ENCODE measurements at regions of chr9 and their contacts with region 1.

Region 1: GRCh38 chr9:38249587-38250210 is 142.8 kb upstream of the ALDH1B1 start:
- DNase-seq: no peak
- ATAC-seq: no peak
- H3K4me3 ChIP-seq: no peak overlapping the region
- H3K27ac ChIP-seq: no peak overlapping the region
- H3K4me1 ChIP-seq: no peaks in the 10 kb centered on the region
- H3K27me3 ChIP-seq: no peaks in the 10 kb centered on the region
- CTCF ChIP-seq: no peak

Region 2: GRCh38 chr9:37800631-37801286 is 448.9 kb before region 1 on chr9 and contains the start of gene DCAF10:
- CTCF ChIA-PET with region 1: no interaction called
- POLR2A ChIA-PET with region 1: interaction called, 11 read pairs
- in situ Hi-C with region 1: no loop called
- intact Hi-C with region 1: no loop called
- DNase-seq: no peak
- ATAC-seq: peak; percentile 96
- H3K4me3 ChIP-seq: peak within 1 kb of the TSS; percentile 78 to 87
- H3K27ac ChIP-seq: peak within 1 kb of the TSS; percentile 83
- H3K4me1 ChIP-seq: peaks cover 4% of the 10 kb centered on the region; the same call in 1 of the 2 replicates
- H3K27me3 ChIP-seq: no peaks in the 10 kb centered on the region
- CTCF ChIP-seq: no peak
- total RNA-seq, gene DCAF10: 18.5 TPM

Region 3: GRCh38 chr9:38141746-38142591 is 107.7 kb before region 1 on chr9:
- CTCF ChIA-PET with region 1: no interaction called
- POLR2A ChIA-PET with region 1: no interaction called
- in situ Hi-C with region 1: no loop called
- intact Hi-C with region 1: no loop called
- DNase-seq: no peak
- ATAC-seq: no peak
- H3K4me3 ChIP-seq: no peak overlapping the region
- H3K27ac ChIP-seq: no peak overlapping the region
- H3K4me1 ChIP-seq: no peaks in the 10 kb centered on the region
- H3K27me3 ChIP-seq: peaks cover 6% of the 10 kb centered on the region
- CTCF ChIP-seq: no peak

Region 4: GRCh38 chr9:38380872-38381534 is 131.3 kb after region 1 on chr9:
- CTCF ChIA-PET with region 1: no interaction called
- POLR2A ChIA-PET with region 1: no interaction called
- in situ Hi-C with region 1: no loop called
- intact Hi-C with region 1: no loop called
- DNase-seq: no peak
- ATAC-seq: peak; percentile 83
- H3K4me3 ChIP-seq: no peak overlapping the region
- H3K27ac ChIP-seq: peak overlapping the region; percentile 69; the same call in 1 of the 2 replicates
- H3K4me1 ChIP-seq: no peaks in the 10 kb centered on the region; the same call in 1 of the 2 replicates
- H3K27me3 ChIP-seq: no peaks in the 10 kb centered on the region
- CTCF ChIP-seq: no peak

Measured in Panc1 (cell line).